ENCODE measurements at regions of chr13 and their contacts with region 1.

Region 1: DNA sequence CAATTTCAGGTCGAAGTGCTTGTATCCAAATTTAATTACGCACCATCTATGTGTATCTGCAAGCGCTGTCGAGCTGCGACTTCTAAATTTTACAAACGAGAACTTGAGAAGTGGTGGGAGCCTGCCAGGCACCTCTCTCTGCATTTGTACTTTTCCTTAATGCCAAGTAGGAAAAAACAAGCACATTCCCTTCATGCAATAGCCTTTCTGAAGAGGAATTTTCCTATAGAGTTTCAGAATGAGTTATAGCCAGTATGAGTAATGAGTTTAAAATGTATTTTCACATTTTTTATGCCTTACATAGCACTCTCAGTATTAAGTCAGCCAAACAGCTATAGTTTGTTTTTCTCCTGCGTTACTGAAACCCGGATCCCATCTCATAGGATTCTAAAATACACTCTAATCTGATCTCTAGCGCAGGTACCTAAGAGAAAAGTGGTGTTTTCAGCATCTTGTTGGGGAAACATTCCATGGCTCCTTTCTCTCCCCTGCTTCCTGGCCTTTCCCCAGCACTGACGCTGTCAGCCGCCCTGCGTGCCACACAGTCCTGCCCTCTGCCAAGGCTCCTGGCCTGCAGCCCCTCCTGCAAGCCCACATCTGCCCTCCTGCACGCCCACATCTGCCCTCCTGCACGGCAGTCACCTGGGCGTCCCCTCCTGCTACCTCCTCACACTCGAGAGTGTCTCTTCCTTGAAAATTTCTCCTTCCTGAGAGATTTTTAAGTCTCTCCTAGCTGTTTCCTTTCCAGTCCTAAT is 526.9 kb downstream of the MYO16 start:
- DNase-seq: peak; percentile 48 to 98
- H3K4me3 ChIP-seq: peak overlapping the region; percentile 48
- H3K27ac ChIP-seq: peak overlapping the region; percentile 96
- H3K4me1 ChIP-seq: peaks cover 69% of the 10 kb centered on the region
- H3K27me3 ChIP-seq: no peaks in the 10 kb centered on the region
- CTCF ChIP-seq: no peak

Region 2: DNA sequence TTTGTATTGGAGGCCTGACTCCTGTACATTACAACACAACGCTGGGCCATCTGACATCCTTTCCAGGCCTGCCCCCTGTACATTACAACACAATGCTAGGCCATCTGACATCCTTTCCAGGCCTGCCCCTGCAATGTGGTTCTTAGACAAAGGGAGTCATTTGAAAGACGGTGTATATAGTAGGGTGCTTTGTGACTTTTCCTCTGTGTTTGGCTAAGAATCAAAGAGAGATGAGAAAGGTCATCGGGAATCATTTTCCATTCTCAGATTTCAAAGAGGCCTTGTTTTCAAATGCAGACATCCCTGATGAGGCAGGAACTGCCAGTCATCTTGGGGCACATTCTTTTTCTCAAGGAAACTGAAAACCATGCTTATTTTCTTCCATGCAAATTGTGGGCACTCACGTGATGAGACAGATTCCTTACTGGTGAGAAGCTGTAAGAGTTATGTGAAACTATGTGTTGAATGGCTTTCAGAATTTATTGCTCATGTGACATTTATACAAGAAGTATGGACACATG is 24.6 kb after region 1 on chr13:
- CTCF ChIA-PET with region 1: no interaction called
- POLR2A ChIA-PET with region 1: interaction called, 4 read pairs
- intact Hi-C with region 1: loop called (anchors 2 kb)
- DNase-seq: peak; percentile 45 to 57
- H3K4me3 ChIP-seq: no peak overlapping the region
- H3K27ac ChIP-seq: peak overlapping the region; percentile 23; the same call in 1 of the 2 replicates
- H3K4me1 ChIP-seq: no peaks in the 10 kb centered on the region
- H3K27me3 ChIP-seq: no peaks in the 10 kb centered on the region
- CTCF ChIP-seq: no peak

Region 3: DNA sequence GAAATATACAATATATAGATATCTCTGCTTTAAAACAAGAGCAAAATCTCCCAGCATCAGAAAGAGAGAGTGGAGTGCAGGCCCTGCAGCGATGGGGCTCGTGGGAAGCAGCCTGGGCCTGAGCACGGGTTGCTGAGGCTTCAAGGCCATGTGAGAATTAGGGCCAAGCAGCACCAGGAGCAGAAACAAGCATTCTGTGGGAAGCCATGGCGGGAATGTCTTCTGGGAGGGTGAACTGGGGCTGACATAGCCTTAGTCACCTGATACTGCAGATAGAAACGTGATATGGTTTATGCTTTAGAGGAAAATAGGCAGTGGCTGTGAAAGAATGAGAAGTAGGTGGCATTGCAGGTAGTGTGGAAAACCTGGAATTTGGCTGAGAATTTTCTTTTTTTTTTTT is 157.7 kb after region 1 on chr13:
- CTCF ChIA-PET with region 1: interaction called, 19 read pairs
- POLR2A ChIA-PET with region 1: no interaction called
- intact Hi-C with region 1: no loop called
- DNase-seq: no peak
- H3K4me3 ChIP-seq: no peak overlapping the region
- H3K27ac ChIP-seq: no peak overlapping the region
- H3K4me1 ChIP-seq: no peaks in the 10 kb centered on the region
- H3K27me3 ChIP-seq: no peaks in the 10 kb centered on the region
- CTCF ChIP-seq: no peak

Region 4: GRCh38 chr13:109869312-109870237 is 713.2 kb after region 1 on chr13:
- CTCF ChIA-PET with region 1: no interaction called
- POLR2A ChIA-PET with region 1: interaction called, 4 read pairs
- intact Hi-C with region 1: loop called (anchors 10 kb)
- DNase-seq: peak; percentile 82
- H3K4me3 ChIP-seq: peak overlapping the region; percentile 54; the same call in 1 of the 2 replicates
- H3K27ac ChIP-seq: peak overlapping the region; percentile 79
- H3K4me1 ChIP-seq: peaks cover 82% of the 10 kb centered on the region
- H3K27me3 ChIP-seq: no peaks in the 10 kb centered on the region
- CTCF ChIP-seq: peak; percentile 40; the same call in 1 of the 2 replicates

Region 5: DNA sequence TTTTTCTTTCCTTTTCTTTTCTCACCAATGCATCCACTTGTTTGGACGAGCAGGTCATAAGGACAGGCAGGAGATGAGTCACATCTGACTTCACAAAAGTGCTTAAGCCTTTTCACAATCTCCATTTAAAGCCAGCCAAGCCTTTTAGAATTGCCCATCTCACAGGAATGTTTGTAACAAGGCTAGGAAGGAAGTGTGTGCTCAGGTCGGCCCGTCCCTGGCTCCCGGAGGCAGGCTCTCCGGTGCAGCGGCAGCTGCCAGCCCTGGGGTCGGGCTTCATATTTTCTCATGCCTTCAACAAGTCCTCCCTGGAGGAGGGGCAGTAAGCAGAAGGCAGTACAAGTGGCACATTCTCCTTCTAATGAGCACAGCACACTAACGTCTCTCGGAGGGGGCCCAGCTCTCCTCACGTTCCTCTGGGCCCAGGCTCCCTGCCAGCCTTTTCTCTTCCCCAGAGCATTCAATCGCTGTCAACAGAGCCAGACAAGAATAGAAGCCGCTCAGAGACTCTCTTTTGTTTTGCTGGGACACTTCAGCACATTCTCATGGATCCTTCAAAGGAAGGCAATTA is 970.1 kb after region 1 on chr13:
- CTCF ChIA-PET with region 1: no interaction called
- POLR2A ChIA-PET with region 1: interaction called, 12 read pairs
- intact Hi-C with region 1: no loop called
- DNase-seq: peak; percentile 81 to 99
- H3K4me3 ChIP-seq: peak overlapping the region; percentile 33; the same call in 1 of the 2 replicates
- H3K27ac ChIP-seq: peak overlapping the region; percentile 94
- H3K4me1 ChIP-seq: peaks cover 42% of the 10 kb centered on the region
- H3K27me3 ChIP-seq: no peaks in the 10 kb centered on the region
- CTCF ChIP-seq: no peak

Measured in PC-9 (cell line).